ENCODE measurements at regions of chr3 and their contacts with region 1.

Region 1: GRCh38 chr3:187150599-187150998 is 11.3 kb upstream of the RPL39L start:
- DNase-seq: peak; percentile 81
- H3K4me3 Mint-ChIP-seq: no peak overlapping the region
- H3K27ac Mint-ChIP-seq: no peak overlapping the region
- H3K4me1 Mint-ChIP-seq: no peaks in the 10 kb centered on the region
- H3K27me3 Mint-ChIP-seq: no peaks in the 10 kb centered on the region

Region 2: DNA sequence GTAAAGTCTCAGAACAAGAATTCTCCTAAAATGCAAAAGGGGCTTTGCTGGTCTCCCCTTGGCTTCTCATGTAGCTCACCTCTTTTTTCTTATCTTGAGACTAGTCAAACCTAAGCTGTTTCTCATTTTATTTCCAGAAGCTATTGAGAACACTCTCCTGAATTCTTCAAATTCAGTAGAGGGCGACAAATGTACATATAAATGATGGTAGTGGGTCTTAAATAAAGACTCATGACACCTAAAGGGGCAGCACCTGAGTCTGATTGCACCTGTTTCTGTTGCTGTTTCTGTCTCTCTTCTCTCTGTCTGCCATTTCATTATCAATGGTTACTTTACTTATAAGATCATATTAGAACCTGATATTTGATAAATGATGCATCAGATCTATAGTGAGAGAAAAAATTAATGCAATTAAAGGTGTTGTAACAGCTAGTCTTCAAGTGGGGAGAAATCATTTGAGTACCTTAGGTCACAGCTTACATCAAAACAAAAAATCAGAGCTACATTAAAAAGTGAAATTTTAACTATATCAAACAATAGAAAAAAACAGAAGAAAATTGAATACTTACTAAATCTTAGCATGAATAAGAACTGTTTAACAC is 301.1 kb before region 1 on chr3:
- CTCF ChIA-PET with region 1: interaction called, 20 read pairs
- intact Hi-C with region 1: loop called (anchors 1 kb)
- DNase-seq: peak; percentile 45
- H3K4me3 Mint-ChIP-seq: no peak overlapping the region
- H3K27ac Mint-ChIP-seq: no peak overlapping the region
- H3K4me1 Mint-ChIP-seq: peaks cover 12% of the 10 kb centered on the region
- H3K27me3 Mint-ChIP-seq: peaks cover 3% of the 10 kb centered on the region

Region 3: DNA sequence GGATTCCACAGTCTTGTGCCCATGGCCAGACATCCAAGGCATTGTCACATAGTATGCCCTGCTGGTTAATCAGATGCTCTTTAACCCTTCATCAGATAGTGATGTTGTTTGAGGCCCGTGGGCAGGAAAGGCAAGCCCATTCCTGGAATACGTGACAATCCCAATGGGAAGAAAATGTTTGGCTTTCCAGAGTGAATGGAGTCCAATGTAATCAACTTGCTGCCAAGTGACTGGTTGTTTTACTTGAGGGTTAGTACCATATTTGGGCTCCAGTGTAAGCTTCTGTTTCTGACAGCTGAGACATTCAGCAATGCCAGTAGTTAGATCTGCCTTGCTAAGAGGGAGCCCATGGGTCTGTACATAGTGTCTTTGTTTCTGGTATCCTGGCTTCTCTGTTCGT is 42.6 kb before region 1 on chr3:
- CTCF ChIA-PET with region 1: interaction called, 105 read pairs
- intact Hi-C with region 1: loop called (anchors 1 kb)
- DNase-seq: no peak
- H3K4me3 Mint-ChIP-seq: no peak overlapping the region
- H3K27ac Mint-ChIP-seq: no peak overlapping the region
- H3K4me1 Mint-ChIP-seq: peaks cover 2% of the 10 kb centered on the region
- H3K27me3 Mint-ChIP-seq: no peaks in the 10 kb centered on the region

Region 4: DNA sequence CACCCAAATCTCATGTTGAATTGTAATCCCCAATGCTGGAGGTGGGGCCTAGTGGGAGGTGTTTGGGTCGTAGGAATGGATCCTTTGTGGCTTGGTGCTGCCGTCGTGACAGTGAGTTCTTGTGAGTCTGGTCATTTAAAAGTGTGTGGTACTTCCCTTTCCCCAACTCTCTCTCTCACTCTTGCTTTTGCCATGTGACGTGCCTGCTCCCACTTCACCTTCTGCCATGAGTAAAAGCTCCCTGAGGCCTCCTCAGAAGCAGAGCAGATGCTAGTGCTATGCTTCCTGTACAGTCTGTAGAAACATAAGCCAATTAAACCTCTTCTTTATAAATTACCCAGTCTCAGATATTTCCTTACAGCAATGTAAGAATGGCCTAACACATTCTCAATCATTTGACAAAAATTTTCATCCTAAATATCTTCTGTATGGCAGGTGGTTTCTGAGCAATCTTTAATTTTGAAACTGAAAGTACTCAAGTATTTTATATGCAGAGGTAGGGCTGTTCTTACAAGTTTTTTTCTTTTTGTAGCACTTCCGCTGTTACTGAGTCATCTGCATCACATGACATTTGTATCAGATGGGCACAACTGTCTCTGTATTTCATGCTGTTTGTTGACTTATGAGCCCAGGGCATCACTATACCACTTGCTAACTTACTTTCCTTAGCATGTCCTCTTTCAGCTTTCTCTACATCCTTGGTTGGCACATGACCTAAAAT is 20.1 kb before region 1 on chr3:
- CTCF ChIA-PET with region 1: interaction called, 29 read pairs
- intact Hi-C with region 1: no loop called
- DNase-seq: peak; percentile 64
- H3K4me3 Mint-ChIP-seq: peak overlapping the region; percentile 42
- H3K27ac Mint-ChIP-seq: peak overlapping the region; percentile 98
- H3K4me1 Mint-ChIP-seq: peaks cover 40% of the 10 kb centered on the region
- H3K27me3 Mint-ChIP-seq: no peaks in the 10 kb centered on the region

Region 5: DNA sequence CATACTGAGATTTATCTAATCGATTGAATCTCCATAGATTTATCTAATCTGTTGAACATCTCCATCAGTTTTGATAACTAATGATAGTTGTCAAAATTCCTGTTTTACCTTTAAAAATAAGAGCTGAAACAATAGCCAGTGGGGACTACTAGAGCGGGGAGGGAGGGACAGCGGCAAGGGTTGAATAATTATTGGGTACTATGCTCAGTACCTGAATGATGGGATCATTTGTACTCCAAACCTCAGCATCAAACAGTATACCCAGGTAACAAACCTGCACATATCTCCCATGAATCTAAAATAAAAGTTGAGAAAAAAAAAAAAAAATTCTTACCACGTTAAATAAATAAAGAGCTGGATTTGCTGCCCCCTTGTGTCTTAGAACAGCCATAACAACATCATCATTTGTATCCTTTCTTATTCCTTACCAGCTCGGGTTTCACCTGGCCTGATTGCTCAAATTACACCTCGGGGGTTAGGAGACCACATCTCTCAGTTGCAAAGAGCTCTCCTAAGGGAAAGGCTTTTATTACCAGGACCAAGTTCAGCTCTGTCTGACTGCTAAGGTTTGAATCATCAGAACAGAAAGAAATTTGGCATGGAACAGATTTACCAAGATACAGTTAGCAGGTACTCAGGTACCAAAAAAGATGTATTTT is 14.4 kb after region 1 on chr3:
- CTCF ChIA-PET with region 1: interaction called, 20 read pairs
- intact Hi-C with region 1: no loop called
- DNase-seq: peak; percentile 47
- H3K4me3 Mint-ChIP-seq: no peak overlapping the region
- H3K27ac Mint-ChIP-seq: no peak overlapping the region
- H3K4me1 Mint-ChIP-seq: peaks cover 6% of the 10 kb centered on the region
- H3K27me3 Mint-ChIP-seq: no peaks in the 10 kb centered on the region